Activated CD4-positive, alpha-beta T cell treated with anti-CD3 and anti-CD28 coated beads for 36 hours (primary cell): ENCODE measurements at regions of chr6 and their contacts with region 1.

Region 1: DNA sequence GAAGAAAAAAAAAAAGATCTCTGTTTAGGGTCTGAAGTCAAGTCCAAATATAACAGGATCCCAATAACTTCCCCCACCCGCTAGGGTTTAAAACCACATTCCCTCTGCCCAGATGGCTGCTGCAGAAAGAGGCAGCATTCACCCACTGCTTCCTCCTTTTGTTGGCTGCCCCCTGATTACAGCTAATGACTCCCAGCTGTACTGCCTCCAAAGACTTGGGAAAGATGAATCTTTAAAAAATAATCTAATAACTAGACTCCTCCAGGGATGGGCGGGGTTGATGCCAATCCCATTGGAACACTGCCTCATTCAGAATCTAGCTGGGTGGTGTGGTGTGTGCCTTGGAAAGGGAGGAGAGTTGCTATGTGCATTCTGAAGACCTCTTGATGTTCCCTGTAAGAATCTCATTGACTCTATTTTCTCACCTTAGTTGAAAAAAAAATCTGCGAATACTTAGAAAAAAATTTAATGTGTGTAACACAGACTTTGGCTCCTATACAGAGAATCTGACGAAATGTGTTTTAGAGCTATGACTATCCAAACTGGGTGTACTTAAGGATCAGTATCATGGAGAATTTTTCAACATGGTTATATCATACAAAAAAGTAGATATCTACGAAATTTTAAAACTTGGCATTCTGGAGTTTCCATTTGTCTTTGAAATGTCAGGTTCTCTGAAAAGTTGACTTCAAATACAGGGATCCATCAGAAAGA is 174.0 kb downstream of the RNF144B start:
- DNase-seq: no peak
- ATAC-seq: no peak
- H3K4me3 Mint-ChIP-seq: no peak overlapping the region
- H3K27ac Mint-ChIP-seq: no peak overlapping the region
- H3K4me1 Mint-ChIP-seq: no peaks in the 10 kb centered on the region
- H3K27me3 Mint-ChIP-seq: peaks cover 13% of the 10 kb centered on the region

Region 2: GRCh38 chr6:18481870-18482269 is 79.3 kb before region 1 on chr6:
- CTCF ChIA-PET with region 1: no interaction called
- POLR2A ChIA-PET with region 1: no interaction called
- intact Hi-C with region 1: loop called in 1 of 2 experiments (anchors 2 kb)
- DNase-seq: no peak
- ATAC-seq: no peak
- H3K4me3 Mint-ChIP-seq: no peak overlapping the region
- H3K27ac Mint-ChIP-seq: no peak overlapping the region
- H3K4me1 Mint-ChIP-seq: peaks cover 24% of the 10 kb centered on the region
- H3K27me3 Mint-ChIP-seq: peaks cover 26% of the 10 kb centered on the region

Region 3: GRCh38 chr6:18545726-18546125 is 15.5 kb before region 1 on chr6:
- CTCF ChIA-PET with region 1: no interaction called
- POLR2A ChIA-PET with region 1: no interaction called
- intact Hi-C with region 1: no loop called
- DNase-seq: no peak
- ATAC-seq: no peak
- H3K4me3 Mint-ChIP-seq: no peak overlapping the region
- H3K27ac Mint-ChIP-seq: no peak overlapping the region
- H3K4me1 Mint-ChIP-seq: no peaks in the 10 kb centered on the region
- H3K27me3 Mint-ChIP-seq: peaks cover 10% of the 10 kb centered on the region